Vagina (tissue), 2 donors: ENCODE measurements at regions of chr6 and their contacts with region 1.

Region 1: GRCh38 chr6:6856538-6857523 is 250.9 kb upstream of the RREB1 start:
- DNase-seq: no peak
- H3K4me3 ChIP-seq: no peak overlapping the region
- H3K27ac ChIP-seq: no peak overlapping the region
- H3K4me1 ChIP-seq: peaks cover 14% of the 10 kb centered on the region
- H3K27me3 ChIP-seq: no peaks in the 10 kb centered on the region
- CTCF ChIP-seq: no peak
- POLR2A ChIP-seq: no peak

Region 2: GRCh38 chr6:6826095-6826901 is 30.5 kb before region 1 on chr6:
- intact Hi-C with region 1: loop called (anchors 2 kb)
- DNase-seq: peak in 1 of 2 donors; percentile 95
- H3K4me3 ChIP-seq: no peak overlapping the region
- H3K27ac ChIP-seq: peak overlapping the region; percentile 55
- H3K4me1 ChIP-seq: peaks cover 19% of the 10 kb centered on the region
- H3K27me3 ChIP-seq: no peaks in the 10 kb centered on the region
- CTCF ChIP-seq: no peak
- POLR2A ChIP-seq: no peak

Region 3: DNA sequence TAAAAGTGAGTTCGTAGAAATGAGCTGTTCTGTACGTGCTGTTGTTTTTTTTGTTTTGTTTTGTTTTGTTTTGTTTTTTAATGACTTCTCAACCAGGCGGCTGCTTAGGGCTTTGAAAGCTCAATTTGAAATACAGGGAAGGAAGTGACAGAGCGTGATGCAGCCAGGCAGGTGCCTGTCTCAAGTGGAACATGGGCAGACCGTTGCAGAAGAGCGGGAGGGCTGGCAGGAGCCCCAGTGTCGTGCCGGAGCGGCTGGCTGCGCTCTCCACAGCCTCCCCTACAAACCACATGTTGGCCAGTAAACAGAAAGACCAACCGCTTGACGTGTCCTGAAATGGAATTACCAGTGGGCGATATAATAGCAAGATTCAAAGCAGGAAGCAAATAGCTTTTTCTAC is 86.0 kb after region 1 on chr6:
- intact Hi-C with region 1: no loop called
- DNase-seq: no peak
- H3K4me3 ChIP-seq: no peak overlapping the region
- H3K27ac ChIP-seq: no peak overlapping the region
- H3K4me1 ChIP-seq: peaks cover 11% of the 10 kb centered on the region
- H3K27me3 ChIP-seq: no peaks in the 10 kb centered on the region
- CTCF ChIP-seq: no peak
- POLR2A ChIP-seq: no peak